Activated CD4-positive, alpha-beta T cell treated with anti-CD3 and anti-CD28 coated beads for 36 hours (primary cell): ENCODE measurements at regions of chr13 and their contacts with region 1.

Region 1: GRCh38 chr13:31909864-31910551 is 121.6 kb upstream of the FRY start:
- DNase-seq: peak; percentile 69
- ATAC-seq: no peak
- H3K4me3 Mint-ChIP-seq: no peak overlapping the region
- H3K27ac Mint-ChIP-seq: no peak overlapping the region
- H3K4me1 Mint-ChIP-seq: no peaks in the 10 kb centered on the region
- H3K27me3 Mint-ChIP-seq: peaks cover 4% of the 10 kb centered on the region

Region 2: GRCh38 chr13:31862828-31863227 is 47.2 kb before region 1 on chr13:
- CTCF ChIA-PET with region 1: interaction called, 11 read pairs
- POLR2A ChIA-PET with region 1: no interaction called
- intact Hi-C with region 1: no loop called
- DNase-seq: no peak
- ATAC-seq: no peak
- H3K4me3 Mint-ChIP-seq: no peak overlapping the region
- H3K27ac Mint-ChIP-seq: no peak overlapping the region
- H3K4me1 Mint-ChIP-seq: no peaks in the 10 kb centered on the region
- H3K27me3 Mint-ChIP-seq: peaks cover 5% of the 10 kb centered on the region

Region 3: DNA sequence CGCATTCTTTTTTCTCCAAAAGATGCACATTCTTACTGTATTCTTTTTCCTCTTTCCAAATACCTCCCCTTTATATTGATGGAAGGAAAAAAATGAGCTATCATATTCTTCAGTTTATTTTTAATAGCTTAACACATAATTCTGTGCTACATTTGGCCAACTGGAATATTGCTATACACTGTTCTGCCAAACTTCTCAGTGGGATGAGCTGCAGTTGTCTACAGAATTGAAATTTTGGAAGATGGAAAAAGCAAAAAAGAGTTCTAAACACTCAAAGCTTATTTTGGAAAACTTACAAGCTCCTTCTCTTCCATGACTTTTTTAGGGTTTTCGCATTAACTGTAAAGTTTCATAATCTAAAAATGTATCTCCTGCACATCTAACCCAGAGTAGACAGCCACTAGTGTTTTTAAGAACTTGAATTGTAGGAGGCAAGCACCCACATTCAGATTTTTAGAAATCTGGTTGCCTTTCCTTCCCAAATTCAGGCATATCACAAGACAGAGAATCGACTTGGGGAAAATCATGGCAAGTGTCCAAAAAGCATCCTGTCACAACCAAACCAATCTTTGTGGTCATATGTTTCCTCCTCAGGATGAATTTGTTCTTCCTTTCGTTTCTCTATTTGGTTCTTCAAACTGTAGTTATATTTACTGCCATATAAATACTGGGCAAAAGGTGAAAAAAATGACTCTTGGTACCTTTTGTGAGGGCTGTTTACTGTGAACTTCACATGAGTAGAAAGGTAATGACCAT is 10.1 kb after region 1 on chr13:
- CTCF ChIA-PET with region 1: interaction called, 22 read pairs
- POLR2A ChIA-PET with region 1: no interaction called
- intact Hi-C with region 1: no loop called
- DNase-seq: no peak
- ATAC-seq: no peak
- H3K4me3 Mint-ChIP-seq: no peak overlapping the region
- H3K27ac Mint-ChIP-seq: no peak overlapping the region
- H3K4me1 Mint-ChIP-seq: peaks cover 10% of the 10 kb centered on the region
- H3K27me3 Mint-ChIP-seq: no peaks in the 10 kb centered on the region

Region 4: DNA sequence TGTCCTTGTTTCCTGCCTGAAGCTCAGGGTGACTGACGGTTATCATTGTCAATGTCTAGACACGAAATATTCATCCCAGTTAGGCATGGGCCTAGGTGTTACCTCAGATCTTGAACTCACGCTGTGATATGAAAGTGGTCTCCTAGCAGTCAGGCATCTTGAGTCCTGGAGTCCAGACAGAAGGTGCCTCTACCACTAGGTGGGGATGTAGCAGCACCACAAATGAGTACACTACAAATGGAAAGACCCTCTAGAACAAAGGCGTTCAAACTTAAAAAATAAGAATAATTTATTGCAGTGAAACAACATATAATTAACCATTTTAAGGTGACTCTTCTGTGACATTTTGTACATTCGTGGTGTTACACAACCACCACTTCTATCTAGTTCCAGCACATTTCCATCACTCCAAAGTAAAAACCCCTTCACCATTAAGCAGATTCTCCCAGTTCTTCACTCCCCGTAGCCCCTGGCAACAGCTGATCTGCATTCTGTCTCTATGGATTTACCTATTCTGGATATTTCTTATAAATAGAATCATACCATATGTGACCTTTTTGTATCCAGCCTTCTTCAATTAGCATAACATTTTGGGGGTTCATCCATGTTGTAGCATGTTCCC is 109.7 kb after region 1 on chr13:
- CTCF ChIA-PET with region 1: interaction called, 5 read pairs
- POLR2A ChIA-PET with region 1: no interaction called
- intact Hi-C with region 1: loop called in 1 of 2 experiments (anchors 10 kb)
- DNase-seq: peak; percentile 51
- ATAC-seq: peak; percentile 72
- H3K4me3 Mint-ChIP-seq: no peak overlapping the region
- H3K27ac Mint-ChIP-seq: no peak overlapping the region
- H3K4me1 Mint-ChIP-seq: no peaks in the 10 kb centered on the region
- H3K27me3 Mint-ChIP-seq: no peaks in the 10 kb centered on the region

Region 5: DNA sequence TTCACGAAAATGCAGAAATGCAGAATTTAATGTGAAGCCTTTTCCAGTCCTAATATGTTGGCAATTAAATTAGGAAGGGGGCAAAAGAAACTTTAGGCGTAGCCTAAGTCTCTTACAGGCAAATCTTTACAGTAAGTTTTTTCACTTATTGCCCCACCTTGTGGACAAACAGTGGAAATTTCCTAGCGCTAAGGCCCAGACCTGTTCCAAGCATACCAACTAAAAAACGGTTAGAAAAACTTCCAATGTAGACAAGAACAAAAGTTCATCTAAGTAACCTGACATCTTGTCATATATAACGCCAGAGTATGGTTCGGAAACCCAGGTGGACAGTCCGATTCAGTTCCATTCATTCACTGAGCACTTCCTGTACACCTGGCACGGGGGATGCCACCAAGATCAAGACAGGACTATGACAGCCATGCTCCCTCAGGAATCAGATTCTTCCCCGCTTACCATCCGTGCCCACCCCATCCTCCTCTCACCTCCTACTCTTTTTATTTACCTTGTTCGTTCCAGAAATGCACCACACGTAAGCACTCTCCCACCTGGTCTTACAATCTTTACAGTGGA is 400.2 kb after region 1 on chr13:
- CTCF ChIA-PET with region 1: interaction called, 13 read pairs
- POLR2A ChIA-PET with region 1: no interaction called
- intact Hi-C with region 1: loop called (anchors 1 kb)
- DNase-seq: peak; percentile 32
- ATAC-seq: peak; percentile 70
- H3K4me3 Mint-ChIP-seq: no peak overlapping the region
- H3K27ac Mint-ChIP-seq: no peak overlapping the region
- H3K4me1 Mint-ChIP-seq: peaks cover 17% of the 10 kb centered on the region
- H3K27me3 Mint-ChIP-seq: no peaks in the 10 kb centered on the region

Region 6: GRCh38 chr13:32443111-32443510 is 533.1 kb after region 1 on chr13:
- CTCF ChIA-PET with region 1: no interaction called
- POLR2A ChIA-PET with region 1: no interaction called
- intact Hi-C with region 1: loop called in 1 of 2 experiments (anchors 5 kb)
- DNase-seq: peak; percentile 57
- ATAC-seq: peak; percentile 53
- H3K4me3 Mint-ChIP-seq: no peak overlapping the region
- H3K27ac Mint-ChIP-seq: no peak overlapping the region
- H3K4me1 Mint-ChIP-seq: peaks cover 12% of the 10 kb centered on the region
- H3K27me3 Mint-ChIP-seq: no peaks in the 10 kb centered on the region